OCI-LY7 (cell line): ENCODE measurements at regions of chr11 and their contacts with region 1.

Region 1: GRCh38 chr11:111870886-111871692 is at the start of gene ALG9:
- DNase-seq: peak; percentile 79
- H3K4me3 ChIP-seq: peak within 1 kb of the TSS; percentile 79
- H3K27ac ChIP-seq: peak within 1 kb of the TSS; percentile 12
- H3K4me1 ChIP-seq: peaks cover 16% of the 10 kb centered on the region
- CTCF ChIP-seq: peak; percentile 43; the same call in 1 of the 2 replicates
- total RNA-seq, gene ALG9: 13.8 and 16.8 TPM in 2 replicates

Region 2: DNA sequence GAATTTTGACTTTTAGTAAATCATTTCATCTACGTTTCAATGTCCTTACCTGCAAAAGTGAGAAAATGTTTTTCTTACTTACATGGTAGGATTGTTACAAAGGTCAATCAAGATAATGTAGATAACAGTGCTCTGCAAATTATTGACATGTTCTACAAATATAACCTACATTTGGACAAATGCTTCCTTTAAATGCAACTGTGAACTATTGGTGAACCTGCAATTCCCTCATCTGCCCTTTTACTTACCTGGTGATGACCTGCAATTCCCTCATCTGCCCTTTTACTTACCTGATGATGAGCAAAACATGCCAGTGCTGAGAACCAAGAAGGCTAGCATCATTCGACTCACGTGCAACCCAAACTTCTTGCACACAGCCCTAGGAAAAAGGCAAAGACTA is 10.8 kb before region 1 on chr11:
- CTCF ChIA-PET with region 1: no interaction called
- POLR2A ChIA-PET with region 1: interaction called, 10 read pairs
- intact Hi-C with region 1: no loop called
- DNase-seq: no peak
- H3K4me3 ChIP-seq: no peak overlapping the region
- H3K27ac ChIP-seq: no peak overlapping the region
- H3K4me1 ChIP-seq: no peaks in the 10 kb centered on the region
- CTCF ChIP-seq: no peak